ENCODE measurements at regions of chr11 and their contacts with region 1.

Region 1: DNA sequence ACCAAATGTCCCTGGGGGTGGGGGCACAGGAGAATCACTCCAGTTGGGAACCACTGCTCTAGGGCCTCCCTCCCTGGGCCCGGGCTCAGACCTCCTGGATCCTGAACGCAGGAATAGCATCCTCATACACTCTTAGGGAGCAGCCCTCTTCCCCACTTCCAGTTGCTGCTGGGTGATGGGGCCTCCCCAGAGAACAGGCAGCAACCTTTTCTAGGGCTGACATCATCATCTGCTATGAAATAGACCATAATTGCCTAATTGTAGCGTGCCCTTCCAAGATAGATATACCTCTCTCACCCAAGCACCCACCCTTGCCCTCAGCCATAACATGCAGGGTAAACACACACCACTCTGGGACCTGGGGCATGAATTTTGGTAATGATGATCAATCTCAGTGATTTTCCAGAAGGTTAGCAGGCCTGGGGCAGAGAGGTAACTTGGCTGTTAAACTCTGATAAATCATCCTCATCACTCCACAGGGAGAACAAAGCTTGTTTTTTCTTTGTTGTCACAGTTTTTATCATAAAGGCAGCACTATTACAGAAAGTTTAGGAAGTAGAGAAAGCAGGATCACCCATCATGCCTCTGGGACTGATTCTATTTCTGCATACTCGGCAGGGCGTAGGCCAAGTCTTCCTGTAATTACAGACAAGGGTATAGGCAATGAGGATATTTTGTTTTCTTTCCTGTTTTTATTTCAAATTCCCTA is 88.3 kb upstream of the PRDM11 start:
- DNase-seq: no peak
- ATAC-seq: no peak
- H3K4me3 Mint-ChIP-seq: no peak overlapping the region
- H3K27ac Mint-ChIP-seq: no peak overlapping the region
- H3K4me1 Mint-ChIP-seq: peaks cover 15% of the 10 kb centered on the region
- H3K27me3 Mint-ChIP-seq: peaks cover 11% of the 10 kb centered on the region
- CTCF ChIP-seq: no peak

Region 2: DNA sequence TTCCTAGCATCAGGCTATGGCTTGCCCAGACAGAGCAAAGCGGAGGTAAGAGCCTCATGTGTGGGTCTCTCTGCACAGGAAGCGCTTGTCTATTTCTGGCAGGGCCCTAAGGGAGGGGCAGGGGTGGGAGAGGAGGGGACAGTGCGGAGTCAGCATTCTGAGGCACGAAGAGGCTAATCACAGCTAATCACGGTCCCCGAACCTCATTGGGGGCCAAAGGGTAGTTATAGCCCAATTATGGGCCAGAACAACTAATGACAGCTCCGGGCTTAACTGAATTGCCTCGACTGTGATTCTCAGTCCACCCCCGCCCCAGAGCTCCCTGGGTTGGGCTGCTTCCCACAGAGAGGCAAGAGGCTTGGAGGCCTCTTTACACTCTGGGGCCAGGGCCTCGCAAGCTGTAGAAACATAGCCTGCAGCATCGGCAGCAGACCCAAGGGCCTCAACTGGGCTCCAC is 15.6 kb after region 1 on chr11:
- CTCF ChIA-PET with region 1: no interaction called
- POLR2A ChIA-PET with region 1: interaction called, 3 read pairs
- intact Hi-C with region 1: loop called (anchors 2 kb)
- DNase-seq: no peak
- ATAC-seq: peak; percentile 90
- H3K4me3 Mint-ChIP-seq: peak overlapping the region; percentile 48
- H3K27ac Mint-ChIP-seq: peak overlapping the region; percentile 66
- H3K4me1 Mint-ChIP-seq: peaks cover 43% of the 10 kb centered on the region
- H3K27me3 Mint-ChIP-seq: no peaks in the 10 kb centered on the region
- CTCF ChIP-seq: no peak